Heart right ventricle (tissue), 16 donors: ENCODE measurements at regions of chr4 and their contacts with region 1.

Region 1: DNA sequence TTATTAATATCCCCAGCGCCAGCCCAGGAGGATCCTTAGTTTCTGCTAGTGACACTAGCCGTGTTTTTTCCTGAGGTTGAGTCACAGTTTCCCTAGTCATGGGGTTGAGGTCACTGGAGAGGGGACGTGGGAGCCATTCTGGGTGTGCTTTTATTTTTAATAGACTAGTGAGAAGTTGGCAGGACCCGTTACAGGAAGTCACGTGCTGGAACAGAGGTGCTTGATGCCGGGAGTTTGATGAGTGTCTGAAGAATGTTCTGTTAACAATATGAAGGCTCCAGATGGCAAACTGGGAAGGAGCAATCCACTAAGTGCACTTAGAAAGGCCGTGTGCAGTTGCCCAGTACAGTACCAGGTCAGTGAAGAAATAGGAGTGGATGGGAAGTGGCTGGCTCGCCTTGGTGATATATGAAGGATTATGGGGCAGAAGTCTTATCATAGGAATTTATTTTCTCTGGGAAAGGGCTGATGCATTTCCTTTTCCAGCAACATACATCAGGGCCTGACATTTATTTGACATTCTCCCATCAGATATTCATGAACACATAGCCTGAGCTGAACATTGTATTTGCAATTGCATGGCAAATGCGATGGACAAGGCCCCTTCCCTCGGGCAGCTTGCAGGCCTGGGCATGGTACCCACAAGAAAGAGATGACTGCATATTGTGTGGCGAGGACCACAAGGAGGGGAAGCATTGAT is 291.8 kb downstream of the FBXW7 start:
- DNase-seq: peak in 1 of 2 donors; percentile 76
- ATAC-seq: peak; percentile 84 to 94 (median 90)
- H3K4me3 ChIP-seq: no peak overlapping the region
- H3K27ac ChIP-seq: peak overlapping the region in 9 of 10 donors; percentile 34 to 72 (median 55)
- H3K4me1 ChIP-seq: peaks cover 0 to 27% (median 18%) of the 10 kb centered on the region in 9 donors
- H3K27me3 ChIP-seq: no peaks in the 10 kb centered on the region
- CTCF ChIP-seq: no peak

Region 2: DNA sequence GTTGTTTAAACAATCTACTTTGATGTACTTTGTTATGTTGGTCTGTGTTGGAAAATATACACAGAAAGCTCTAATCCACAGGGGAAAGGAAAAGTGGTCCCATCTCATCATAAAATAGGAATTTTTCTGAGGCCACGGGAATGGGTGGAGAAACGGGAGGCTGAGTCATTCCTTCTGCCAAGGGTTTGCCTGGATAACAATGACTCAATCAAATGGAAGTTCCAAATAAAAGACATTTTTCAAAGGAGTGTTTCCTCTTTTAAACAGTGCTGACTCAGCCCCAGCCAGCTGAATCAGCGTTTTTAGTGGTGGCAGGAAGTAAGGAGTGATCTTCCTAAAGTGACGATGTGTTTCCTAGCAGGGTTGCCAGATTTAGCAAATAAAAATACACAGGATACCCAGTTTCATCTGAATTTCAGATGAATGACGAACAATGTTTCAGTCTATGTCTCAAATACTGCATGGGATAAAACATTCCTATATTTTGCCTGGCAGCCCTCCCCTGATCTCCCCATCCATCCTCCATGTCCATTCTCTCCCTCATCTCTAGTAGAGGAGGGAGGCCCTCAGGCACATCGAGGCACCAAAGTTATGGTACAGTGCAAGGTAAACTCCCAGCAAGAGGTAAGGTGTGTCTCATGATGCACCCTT is 137.8 kb before region 1 on chr4:
- intact Hi-C with region 1: loop called in 2 of 10 experiments (anchors 5 to 10 kb)
- DNase-seq: peak; percentile 44 to 76
- ATAC-seq: peak in 7 of 8 donors; percentile 29 to 80 (median 58)
- H3K4me3 ChIP-seq: no peak overlapping the region
- H3K27ac ChIP-seq: peak overlapping the region in 6 of 10 donors; percentile 5 to 78 (median 46)
- H3K4me1 ChIP-seq: peaks cover 7 to 66% (median 59%) of the 10 kb centered on the region in 9 donors
- H3K27me3 ChIP-seq: no peaks in the 10 kb centered on the region
- CTCF ChIP-seq: no peak

Region 3: DNA sequence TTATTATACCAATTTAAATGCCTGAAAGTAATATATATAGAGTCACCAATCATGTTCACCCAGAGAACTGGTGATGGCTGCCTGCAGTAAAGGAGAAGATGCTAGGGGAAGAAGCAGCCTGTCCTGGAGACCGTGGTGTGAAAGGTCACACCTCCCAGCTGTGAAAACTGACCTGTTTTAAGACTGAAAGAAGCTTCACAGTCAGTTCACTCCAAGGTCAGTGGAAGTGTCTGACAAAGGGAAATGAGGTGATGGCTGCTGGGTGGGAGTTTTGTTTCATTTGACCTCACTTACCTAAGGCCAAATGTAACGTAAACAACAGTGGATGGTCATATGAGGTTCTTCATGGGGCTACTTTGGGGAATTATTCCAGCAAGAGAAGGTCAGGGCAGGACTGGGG is 131.2 kb before region 1 on chr4:
- intact Hi-C with region 1: loop called in 2 of 10 experiments (anchors 5 to 10 kb)
- DNase-seq: no peak
- ATAC-seq: no peak
- H3K4me3 ChIP-seq: no peak overlapping the region
- H3K27ac ChIP-seq: peak overlapping the region in 1 of 10 donors; percentile 12
- H3K4me1 ChIP-seq: peaks cover 7 to 68% (median 43%) of the 10 kb centered on the region in 9 donors
- H3K27me3 ChIP-seq: no peaks in the 10 kb centered on the region
- CTCF ChIP-seq: no peak

Region 4: DNA sequence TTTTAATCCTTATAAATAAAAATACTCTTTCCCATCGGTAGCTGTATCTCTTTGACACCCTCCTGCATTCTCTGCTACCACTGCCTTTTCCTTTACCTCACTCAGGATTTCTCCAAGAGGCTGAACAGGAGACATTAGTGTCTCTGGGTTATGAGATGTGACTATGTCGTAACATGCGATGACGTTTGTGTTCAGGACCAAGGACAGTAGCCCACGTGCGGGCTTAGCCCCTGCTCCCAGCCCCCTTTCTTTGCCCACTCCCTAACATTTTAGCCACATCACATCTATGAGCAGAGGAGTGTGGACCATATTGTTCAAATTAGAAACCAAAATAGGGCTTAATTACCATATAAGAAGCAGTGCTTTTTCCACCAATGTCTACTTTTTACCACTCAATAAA is 77.5 kb before region 1 on chr4:
- intact Hi-C with region 1: loop called in 1 of 10 experiments (anchors 5 kb)
- DNase-seq: no peak
- ATAC-seq: no peak
- H3K4me3 ChIP-seq: no peak overlapping the region
- H3K27ac ChIP-seq: no peak overlapping the region
- H3K4me1 ChIP-seq: peaks cover 5 to 14% (median 12%) of the 10 kb centered on the region in 9 donors
- H3K27me3 ChIP-seq: no peaks in the 10 kb centered on the region
- CTCF ChIP-seq: no peak

Region 5: GRCh38 chr4:152200511-152201333 is 43.3 kb before region 1 on chr4:
- intact Hi-C with region 1: loop called in 1 of 10 experiments (anchors 5 kb)
- DNase-seq: no peak
- ATAC-seq: no peak
- H3K4me3 ChIP-seq: no peak overlapping the region
- H3K27ac ChIP-seq: no peak overlapping the region
- H3K4me1 ChIP-seq: peaks cover under 1 to 22% (median 16%) of the 10 kb centered on the region in 9 donors
- H3K27me3 ChIP-seq: no peaks in the 10 kb centered on the region
- CTCF ChIP-seq: no peak